Common myeloid progenitor, CD34-positive (primary cell): ENCODE measurements at regions of chr3 and their contacts with region 1.

Region 1: DNA sequence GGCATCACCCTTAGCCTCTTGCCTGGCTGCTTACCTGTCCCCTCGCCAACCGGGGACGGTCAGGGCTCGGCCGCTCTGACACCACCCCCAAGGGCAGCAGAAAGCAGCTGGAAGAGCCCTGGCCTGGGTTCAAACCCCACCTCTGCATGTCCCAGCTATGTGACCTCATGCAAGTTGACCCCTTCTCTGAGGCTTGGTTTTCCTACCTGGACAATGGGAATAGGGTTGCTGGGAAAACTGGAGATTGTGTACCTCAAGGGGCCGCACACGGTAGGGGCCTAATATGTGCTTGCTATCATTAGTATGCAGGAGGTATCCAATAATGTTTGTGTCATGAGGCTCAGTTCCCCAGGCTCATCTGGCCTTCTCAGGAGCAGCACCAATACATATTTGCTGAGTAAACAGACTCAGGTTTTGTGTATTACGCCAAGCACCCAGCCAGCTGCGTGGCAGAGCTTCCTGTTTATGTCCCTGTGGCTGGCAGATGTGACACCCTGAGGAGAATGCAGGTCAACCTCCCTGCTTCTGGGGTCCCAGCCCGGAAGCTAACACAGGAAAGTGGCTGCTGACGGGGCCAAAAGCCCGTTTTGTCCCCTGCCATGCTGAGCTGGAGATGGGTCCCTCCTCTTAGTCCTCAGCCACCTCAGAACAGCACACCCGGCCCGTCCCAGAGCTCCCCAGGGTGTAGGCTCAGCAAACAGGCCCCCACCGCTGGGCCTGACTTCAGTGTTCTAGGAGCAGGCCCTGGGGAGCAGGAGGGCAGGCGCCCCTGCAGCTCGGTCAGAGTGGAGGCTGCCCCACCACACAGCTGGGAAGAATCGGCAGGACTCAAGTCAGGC is 29.7 kb downstream of the PLXND1 start:
- DNase-seq: peak; percentile 81 to 96 (median 93)
- H3K4me3 ChIP-seq: peak overlapping the region in 5 of 7 experiments; percentile 15 to 68 (median 25)
- H3K27ac ChIP-seq: peak overlapping the region; percentile 54 to 63
- H3K4me1 ChIP-seq: peaks cover 0 to 59% (median 50%) of the 10 kb centered on the region in 4 experiments
- H3K27me3 ChIP-seq: no peaks in the 10 kb centered on the region

Region 2: DNA sequence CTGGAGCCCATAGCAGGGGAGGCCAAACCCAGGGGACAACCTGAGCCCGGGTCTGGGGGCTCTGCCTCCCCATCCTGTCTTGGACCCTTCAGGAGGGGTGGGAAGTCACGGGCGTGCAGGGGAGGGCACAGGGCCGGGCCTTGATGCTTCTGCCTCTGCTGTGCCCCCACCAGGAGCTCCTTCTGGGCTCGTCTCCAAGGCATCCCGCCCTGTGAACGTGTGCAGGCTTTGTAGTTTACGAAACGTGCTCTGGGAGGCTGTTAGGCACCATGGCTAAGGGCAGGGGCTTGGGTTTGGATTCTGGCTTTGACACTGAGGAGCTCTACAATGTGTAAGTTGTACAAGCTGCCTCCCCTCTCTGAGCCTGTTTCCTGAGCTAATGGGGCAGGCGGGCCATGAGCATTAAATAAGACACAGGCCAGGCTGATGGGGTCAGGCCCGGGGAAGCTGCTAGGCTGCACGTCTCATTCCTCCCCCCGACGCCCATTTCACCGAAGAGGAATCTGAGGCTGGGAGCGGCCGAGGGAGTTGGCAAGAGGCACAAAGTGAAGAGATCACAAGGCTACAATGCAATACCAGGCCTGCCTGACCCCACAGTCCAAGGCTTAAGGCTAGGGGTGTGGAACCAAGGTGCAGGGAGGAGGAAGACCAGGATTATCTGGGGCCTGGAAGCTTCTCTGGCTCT is 10.2 kb after region 1 on chr3:
- CTCF ChIA-PET with region 1: interaction called, 158 read pairs
- POLR2A ChIA-PET with region 1: interaction called, 11 read pairs
- DNase-seq: no peak
- H3K4me3 ChIP-seq: no peak overlapping the region
- H3K27ac ChIP-seq: no peak overlapping the region
- H3K4me1 ChIP-seq: peaks cover 2 to 42% (median 18%) of the 10 kb centered on the region in 4 experiments
- H3K27me3 ChIP-seq: no peaks in the 10 kb centered on the region

Region 3: GRCh38 chr3:129596194-129597086 is 19.7 kb after region 1 on chr3:
- CTCF ChIA-PET with region 1: interaction called, 158 read pairs
- POLR2A ChIA-PET with region 1: interaction called, 8 read pairs
- DNase-seq: peak; percentile 47 to 84 (median 72)
- H3K4me3 ChIP-seq: peak overlapping the region in 3 of 7 experiments; percentile 15 to 40 (median 37)
- H3K27ac ChIP-seq: peak overlapping the region in 1 of 2 experiments; percentile 14
- H3K4me1 ChIP-seq: peaks cover 6 to 100% (median 95%) of the 10 kb centered on the region in 4 experiments
- H3K27me3 ChIP-seq: no peaks in the 10 kb centered on the region

Region 4: DNA sequence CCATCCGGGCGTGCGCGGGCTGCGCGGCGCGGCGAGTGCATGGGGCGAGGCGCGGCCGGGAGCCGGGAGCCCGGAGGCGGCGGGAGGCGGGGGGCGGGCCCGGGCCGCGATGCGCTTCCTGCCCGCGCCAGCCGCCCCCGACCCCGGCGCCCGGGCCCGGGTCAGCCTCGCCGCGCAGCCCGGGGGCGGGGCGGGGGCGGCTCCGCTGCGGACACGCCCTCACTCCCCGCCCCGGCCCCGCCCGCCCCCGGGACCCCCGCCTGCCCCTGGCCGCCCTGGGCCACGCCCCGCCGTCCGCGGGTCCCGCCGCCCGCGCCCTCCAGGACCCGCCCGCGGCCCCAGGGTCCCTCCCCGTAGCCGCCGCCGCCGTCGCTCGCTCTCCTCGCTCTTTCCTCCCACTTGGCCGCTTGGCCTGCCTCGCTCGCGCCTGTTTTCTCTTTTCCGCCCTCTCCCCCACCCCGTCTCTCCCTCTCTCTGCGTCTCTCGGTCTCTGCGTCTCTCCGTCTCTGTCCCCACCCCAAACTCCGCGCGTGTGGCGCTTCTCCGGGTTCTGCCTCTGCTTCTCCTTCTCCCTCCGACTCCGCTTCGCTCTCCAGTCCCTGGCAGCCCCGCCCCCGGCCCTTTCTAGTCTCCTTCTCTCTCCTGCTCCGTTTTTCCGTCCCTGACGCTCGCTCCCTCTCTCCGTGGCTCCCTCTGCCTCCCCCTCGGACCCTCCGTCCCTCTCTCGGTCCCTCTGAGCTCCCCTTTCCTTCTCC is 30.1 kb after region 1 on chr3 and contains the start of gene PLXND1:
- CTCF ChIA-PET with region 1: interaction called, 13 read pairs
- POLR2A ChIA-PET with region 1: interaction called, 4 read pairs
- DNase-seq: peak in 2 of 3 donors; percentile 55 to 65
- H3K4me3 ChIP-seq: peak within 1 kb of the TSS; percentile 52 to 82 (median 73)
- H3K27ac ChIP-seq: peak within 1 kb of the TSS in 1 of 2 experiments; percentile 25
- H3K4me1 ChIP-seq: peaks cover 0 to 84% (median 70%) of the 10 kb centered on the region in 4 experiments
- H3K27me3 ChIP-seq: no peaks in the 10 kb centered on the region

Region 5: GRCh38 chr3:129633751-129634392 is 57.1 kb after region 1 on chr3:
- CTCF ChIA-PET with region 1: no interaction called
- POLR2A ChIA-PET with region 1: no interaction called
- DNase-seq: no peak
- H3K4me3 ChIP-seq: no peak overlapping the region
- H3K27ac ChIP-seq: no peak overlapping the region
- H3K4me1 ChIP-seq: no peaks in the 10 kb centered on the region
- H3K27me3 ChIP-seq: no peaks in the 10 kb centered on the region